Heart left ventricle (tissue), 16 donors: ENCODE measurements at regions of chr10 and their contacts with region 1.

Region 1: DNA sequence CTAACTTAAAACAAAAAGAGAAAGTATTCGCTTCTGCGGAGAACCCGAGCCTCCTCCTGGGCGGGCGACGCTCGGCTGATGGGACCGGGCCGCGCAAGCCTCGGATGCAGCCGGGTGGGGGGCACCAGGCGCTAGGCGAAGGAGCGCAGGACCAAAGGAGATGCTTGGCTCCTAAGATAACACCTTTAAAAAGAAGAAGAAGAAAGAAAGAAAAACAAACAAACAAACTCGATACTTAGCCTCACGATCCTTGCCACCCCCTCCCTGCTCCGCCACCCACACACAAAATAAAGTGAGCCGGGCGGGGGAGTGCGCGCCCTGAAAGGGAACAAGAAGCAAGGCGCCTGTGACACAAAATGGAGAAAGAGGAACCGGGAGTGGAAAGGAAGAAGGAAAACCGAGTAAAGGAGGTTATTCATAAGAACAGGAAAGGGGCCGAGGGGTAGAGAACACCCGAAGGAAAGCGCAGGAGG is 34.0 kb upstream of the EBLN1 start:
- DNase-seq: peak; percentile 65 to 81 (median 76)
- ATAC-seq: peak; percentile 62 to 78 (median 68)
- H3K4me3 ChIP-seq: peak overlapping the region; percentile 65 to 85 (median 76)
- H3K27ac ChIP-seq: peak overlapping the region; percentile 96 to 98 (median 97)
- H3K4me1 ChIP-seq: peaks cover 0 to 18% (median 2%) of the 10 kb centered on the region in 12 donors
- H3K27me3 ChIP-seq: no peaks in the 10 kb centered on the region
- CTCF ChIP-seq: peak in 2 of 12 donors; percentile 6 to 15
- POLR2A ChIP-seq: no peak

Region 2: GRCh38 chr10:21533467-21534279 is 718.1 kb before region 1 on chr10 and contains the start of gene MLLT10:
- intact Hi-C with region 1: loop called in 1 of 10 experiments (anchors 5 kb)
- DNase-seq: peak; percentile 96 to 98 (median 97)
- ATAC-seq: peak; percentile 86 to 97 (median 94)
- H3K4me3 ChIP-seq: peak within 1 kb of the TSS; percentile 54 to 88 (median 78)
- H3K27ac ChIP-seq: peak within 1 kb of the TSS; percentile 89 to 99 (median 97)
- H3K4me1 ChIP-seq: peaks cover 0 to 31% (median 22%) of the 10 kb centered on the region in 12 donors
- H3K27me3 ChIP-seq: no peaks in the 10 kb centered on the region
- CTCF ChIP-seq: peak in 7 of 12 donors; percentile 17 to 44 (median 21)
- POLR2A ChIP-seq: peak in 1 of 2 donors; percentile 76
- total RNA-seq, gene MLLT10: 17.1 to 30.7 (median 25.2) TPM

Region 3: GRCh38 chr10:22228943-22229801 is 22.6 kb before region 1 on chr10:
- intact Hi-C with region 1: loop called in 5 of 10 experiments (anchors 1 to 2 kb)
- DNase-seq: peak; percentile 85 to 90 (median 88)
- ATAC-seq: peak; percentile 91 to 100 (median 98)
- H3K4me3 ChIP-seq: peak overlapping the region; percentile 57 to 89 (median 77)
- H3K27ac ChIP-seq: peak overlapping the region; percentile 85 to 97 (median 92)
- H3K4me1 ChIP-seq: peaks cover 0 to 9% (median 6%) of the 10 kb centered on the region in 12 donors
- H3K27me3 ChIP-seq: no peaks in the 10 kb centered on the region
- CTCF ChIP-seq: no peak
- POLR2A ChIP-seq: peak in 1 of 2 donors; percentile 56

Region 4: DNA sequence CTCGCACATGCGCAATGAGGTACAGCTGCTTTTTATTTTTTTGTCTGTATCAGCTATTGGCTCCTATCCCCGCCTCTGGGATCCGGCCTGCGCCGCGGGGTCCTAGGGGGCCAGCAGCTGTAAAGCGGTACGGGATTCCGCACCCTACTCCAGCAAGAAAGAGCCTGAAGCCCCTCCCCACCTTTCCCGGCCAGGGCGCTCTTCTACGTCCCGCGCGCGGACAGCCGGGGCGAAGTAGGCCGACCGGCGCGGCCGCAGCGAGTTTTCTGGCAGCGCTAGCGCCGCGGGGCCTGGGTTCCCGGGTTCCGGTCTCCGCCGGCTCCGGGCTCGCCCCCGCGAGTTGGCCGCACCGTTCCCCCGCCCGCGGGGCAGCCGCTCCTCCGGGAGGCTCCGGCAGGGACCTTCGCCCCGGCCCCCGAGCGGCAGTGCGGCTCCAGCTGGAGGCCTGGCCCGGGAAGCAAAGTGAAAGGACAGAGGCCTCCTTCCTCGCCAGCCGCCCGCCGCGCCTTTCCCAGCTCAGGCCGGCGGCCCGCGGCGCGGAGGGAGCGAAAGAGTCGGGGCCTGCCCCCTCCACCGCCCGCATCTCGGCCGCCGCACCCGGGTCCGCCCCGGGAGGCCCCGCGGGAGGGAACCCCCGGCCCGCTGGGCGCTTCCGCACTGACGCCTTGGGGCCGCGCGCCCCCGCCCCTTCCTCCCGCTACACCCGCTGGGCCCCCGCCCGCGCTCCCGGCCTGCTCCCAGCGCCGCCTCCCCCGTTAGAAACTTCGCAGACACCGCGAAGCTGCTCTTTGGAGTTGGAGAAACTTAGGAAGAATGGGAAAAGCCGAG is 88.8 kb after region 1 on chr10:
- intact Hi-C with region 1: loop called in 1 of 10 experiments (anchors 1 kb)
- DNase-seq: peak; percentile 69 to 84 (median 72)
- ATAC-seq: peak; percentile 68 to 87 (median 86)
- H3K4me3 ChIP-seq: peak overlapping the region; percentile 62 to 94 (median 81)
- H3K27ac ChIP-seq: peak overlapping the region; percentile 81 to 97 (median 92)
- H3K4me1 ChIP-seq: peaks cover 8 to 37% (median 18%) of the 10 kb centered on the region in 12 donors
- H3K27me3 ChIP-seq: peaks cover 66 to 91% (median 84%) of the 10 kb centered on the region in 9 donors
- CTCF ChIP-seq: no peak
- POLR2A ChIP-seq: peak in 1 of 2 donors; percentile 57

Region 5: GRCh38 chr10:22436884-22437619 is 185.3 kb after region 1 on chr10:
- intact Hi-C with region 1: loop called in 5 of 10 experiments (anchors 2 to 10 kb)
- DNase-seq: peak; percentile 90 to 96 (median 93)
- ATAC-seq: peak; percentile 89 to 97 (median 97)
- H3K4me3 ChIP-seq: peak overlapping the region; percentile 54 to 88 (median 76)
- H3K27ac ChIP-seq: peak overlapping the region; percentile 78 to 98 (median 95)
- H3K4me1 ChIP-seq: peaks cover 0 to 30% (median 15%) of the 10 kb centered on the region in 12 donors
- H3K27me3 ChIP-seq: peaks cover 0 to 3% (median 0%) of the 10 kb centered on the region in 9 donors
- CTCF ChIP-seq: peak in 8 of 12 donors; percentile 5 to 50 (median 27)
- POLR2A ChIP-seq: peak in 1 of 2 donors; percentile 78

Region 6: DNA sequence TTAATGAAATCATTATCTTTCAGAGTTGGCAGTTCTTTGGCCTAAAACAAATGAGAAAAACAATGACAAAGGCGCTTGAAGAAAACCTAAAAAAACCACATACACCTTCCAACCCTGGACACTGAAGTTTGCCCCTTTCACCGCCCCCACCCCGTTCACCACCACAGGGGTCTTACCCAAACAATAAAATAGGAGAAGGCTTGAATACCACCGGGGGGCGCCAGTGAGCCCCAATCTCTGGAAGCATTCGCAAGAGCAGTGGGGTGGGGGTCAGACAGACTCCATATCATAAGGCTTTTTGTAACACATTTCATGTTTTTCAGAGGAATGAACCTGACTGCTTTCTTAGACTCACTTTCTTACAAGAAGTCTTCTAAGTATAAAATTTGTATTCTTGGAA is 298.9 kb after region 1 on chr10:
- intact Hi-C with region 1: loop called in 1 of 10 experiments (anchors 5 kb)
- DNase-seq: peak in 4 of 5 donors; percentile 25 to 74 (median 39)
- ATAC-seq: no peak
- H3K4me3 ChIP-seq: no peak overlapping the region
- H3K27ac ChIP-seq: no peak overlapping the region
- H3K4me1 ChIP-seq: peaks cover 0 to 13% (median 0%) of the 10 kb centered on the region in 12 donors
- H3K27me3 ChIP-seq: no peaks in the 10 kb centered on the region
- CTCF ChIP-seq: peak; percentile 36 to 63 (median 54)
- POLR2A ChIP-seq: no peak